ENCODE measurements at regions of chr9 and their contacts with region 1.

Region 1: GRCh38 chr9:91422758-91423711 is 597 bp downstream of the NFIL3 start:
- DNase-seq: peak; percentile 82
- ATAC-seq: peak; percentile 29

Region 2: GRCh38 chr9:90921111-90921510 is 501.9 kb before region 1 on chr9:
- intact Hi-C with region 1: loop called (anchors 2 kb)
- DNase-seq: peak; percentile 88
- ATAC-seq: peak; percentile 95

Region 3: GRCh38 chr9:91101611-91102168 is 321.3 kb before region 1 on chr9:
- intact Hi-C with region 1: loop called (anchors 5 kb)
- DNase-seq: no peak
- ATAC-seq: no peak

Region 4: DNA sequence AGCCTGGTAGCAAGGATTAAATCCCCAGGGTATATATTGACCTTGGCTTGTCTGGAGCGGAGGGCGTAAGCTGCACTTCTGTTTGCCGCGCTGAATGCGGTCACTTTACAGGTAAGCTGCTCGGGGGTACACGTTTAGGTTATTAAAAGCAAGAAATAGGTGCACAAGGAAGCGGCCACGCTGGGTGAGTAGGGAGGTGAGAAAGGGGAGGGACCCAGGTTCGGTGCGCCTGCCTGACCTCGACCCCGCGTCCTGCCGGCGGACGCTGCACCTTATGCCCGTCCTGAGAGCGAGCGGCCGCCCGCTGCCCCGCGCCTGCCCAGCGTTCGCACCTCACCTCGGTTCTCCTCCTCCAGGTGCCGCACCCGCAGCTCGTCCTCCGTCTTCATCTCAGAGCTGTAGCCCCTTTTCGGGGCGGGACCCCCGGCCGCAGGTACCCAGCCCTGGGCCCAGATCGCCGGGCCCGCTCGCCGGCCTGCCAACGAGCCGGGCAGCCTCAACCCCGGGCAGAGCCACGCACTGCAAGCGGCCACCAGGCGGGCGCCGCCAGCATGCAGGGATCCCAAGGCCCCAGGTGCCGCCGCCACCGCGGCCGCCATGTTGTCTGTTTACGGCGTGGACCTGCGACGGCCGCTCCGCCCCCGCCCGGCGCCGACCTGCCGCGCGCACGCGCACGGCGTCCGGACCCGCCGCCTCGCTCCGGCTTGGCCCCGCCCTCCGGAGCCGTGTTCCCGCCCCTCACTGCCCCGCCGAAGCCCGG is 61.6 kb before region 1 on chr9 and contains the start of gene AUH:
- intact Hi-C with region 1: loop called (anchors 1 kb)
- DNase-seq: peak; percentile 95
- ATAC-seq: peak; percentile 98
- total RNA-seq, gene AUH: 37.9 TPM

Region 5: DNA sequence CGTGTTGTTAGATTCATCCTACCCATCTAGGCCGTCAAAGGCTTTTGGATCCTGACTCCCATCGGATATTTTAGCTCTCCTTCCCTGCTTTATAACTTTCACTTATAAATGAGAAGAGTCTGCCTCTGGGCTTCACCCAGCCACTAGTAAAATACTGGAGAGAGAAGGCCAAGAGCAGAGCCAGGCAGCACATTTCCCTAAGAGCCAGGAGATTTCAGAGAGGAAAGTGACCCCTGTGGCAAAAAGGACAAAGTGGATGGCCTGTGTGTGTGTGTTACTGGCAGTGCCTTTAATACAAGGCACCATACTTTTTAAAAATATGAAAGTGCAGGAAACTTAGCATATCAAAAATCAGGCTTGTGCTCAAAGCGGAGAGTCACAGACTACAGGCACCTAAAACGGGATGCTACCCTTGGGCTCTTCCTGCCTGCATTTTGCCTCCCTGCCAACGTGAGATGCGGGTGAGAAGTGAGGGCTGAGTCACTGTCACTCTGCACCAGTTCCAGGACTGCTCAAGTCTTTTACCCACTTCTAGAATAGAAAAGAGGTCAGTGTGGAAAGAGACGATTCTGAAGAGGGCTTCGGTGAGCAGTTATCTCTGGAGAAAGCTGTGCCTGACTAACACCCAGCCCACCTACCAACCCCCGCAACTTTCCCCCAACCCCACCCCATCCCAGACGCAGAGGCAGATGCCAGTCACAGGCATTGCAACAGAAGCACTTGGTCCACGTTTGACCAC is 15.3 kb before region 1 on chr9:
- intact Hi-C with region 1: no loop called
- DNase-seq: no peak
- ATAC-seq: peak; percentile 56

Region 6: GRCh38 chr9:91681461-91682305 is 258.6 kb after region 1 on chr9:
- intact Hi-C with region 1: loop called (anchors 2 kb)
- DNase-seq: peak; percentile 90
- ATAC-seq: peak; percentile 88